Psoas muscle (tissue), 8 donors: ENCODE measurements at regions of chr16 and their contacts with region 1.

Region 1: DNA sequence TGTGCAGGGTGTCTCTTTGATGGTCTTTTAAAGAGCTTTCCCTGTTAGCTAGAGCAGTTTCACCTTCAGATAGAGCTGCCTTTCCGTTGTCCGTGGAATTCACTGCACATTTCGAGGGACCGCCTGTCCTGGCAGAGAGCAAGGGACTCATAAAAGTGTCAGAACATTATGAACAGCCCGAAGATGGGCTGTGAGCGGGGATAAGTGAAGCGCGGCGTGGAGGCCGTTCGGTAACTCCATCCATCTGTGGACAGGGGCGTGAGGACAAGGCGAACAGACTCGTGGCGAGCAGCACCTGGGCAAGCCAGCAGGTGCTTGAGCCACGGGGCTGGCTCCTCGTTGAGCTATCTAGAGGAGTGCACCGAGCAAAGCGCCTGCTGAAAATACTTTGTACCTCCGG is 371.2 kb downstream of the MAF start:
- DNase-seq: no peak
- ATAC-seq: no peak
- H3K4me3 ChIP-seq: no peak overlapping the region
- H3K27ac ChIP-seq: no peak overlapping the region
- H3K4me1 ChIP-seq: no peaks in the 10 kb centered on the region
- H3K27me3 ChIP-seq: no peaks in the 10 kb centered on the region
- CTCF ChIP-seq: no peak

Region 2: GRCh38 chr16:79170555-79171246 is 58.7 kb before region 1 on chr16:
- intact Hi-C with region 1: loop called in 1 of 2 experiments (anchors 10 kb)
- DNase-seq: peak in 1 of 2 donors; percentile 23
- ATAC-seq: no peak
- H3K4me3 ChIP-seq: no peak overlapping the region
- H3K27ac ChIP-seq: no peak overlapping the region
- H3K4me1 ChIP-seq: no peaks in the 10 kb centered on the region
- H3K27me3 ChIP-seq: no peaks in the 10 kb centered on the region
- CTCF ChIP-seq: no peak

Region 3: GRCh38 chr16:79186196-79186595 is 43.2 kb before region 1 on chr16:
- intact Hi-C with region 1: no loop called
- DNase-seq: no peak
- ATAC-seq: no peak
- H3K4me3 ChIP-seq: no peak overlapping the region
- H3K27ac ChIP-seq: no peak overlapping the region
- H3K4me1 ChIP-seq: no peaks in the 10 kb centered on the region
- H3K27me3 ChIP-seq: no peaks in the 10 kb centered on the region
- CTCF ChIP-seq: no peak

Region 4: DNA sequence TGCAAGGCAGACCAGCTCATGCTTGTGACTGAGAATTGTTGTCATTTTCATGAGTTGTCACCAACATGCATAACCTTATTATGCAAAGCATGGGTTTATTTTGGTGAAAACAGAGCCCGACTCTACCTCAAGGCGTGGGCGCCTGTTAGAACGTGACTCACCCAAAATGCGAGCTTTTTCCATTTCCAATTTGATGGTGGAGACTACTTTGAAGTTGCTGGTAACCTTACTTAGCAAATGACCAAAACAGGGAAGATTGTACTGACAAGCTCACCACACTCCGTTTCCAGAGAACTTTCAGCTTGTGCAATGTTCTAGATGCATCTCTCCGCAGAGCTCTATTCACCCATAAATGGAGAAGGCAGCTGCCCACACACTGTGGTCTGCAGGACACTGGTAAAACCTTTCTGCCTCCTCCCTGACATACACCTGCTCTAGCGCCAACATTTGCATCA is 86.7 kb after region 1 on chr16:
- intact Hi-C with region 1: no loop called
- DNase-seq: no peak
- ATAC-seq: no peak
- H3K4me3 ChIP-seq: no peak overlapping the region
- H3K27ac ChIP-seq: no peak overlapping the region
- H3K4me1 ChIP-seq: peaks cover 16% of the 10 kb centered on the region
- H3K27me3 ChIP-seq: no peaks in the 10 kb centered on the region
- CTCF ChIP-seq: no peak

Region 5: DNA sequence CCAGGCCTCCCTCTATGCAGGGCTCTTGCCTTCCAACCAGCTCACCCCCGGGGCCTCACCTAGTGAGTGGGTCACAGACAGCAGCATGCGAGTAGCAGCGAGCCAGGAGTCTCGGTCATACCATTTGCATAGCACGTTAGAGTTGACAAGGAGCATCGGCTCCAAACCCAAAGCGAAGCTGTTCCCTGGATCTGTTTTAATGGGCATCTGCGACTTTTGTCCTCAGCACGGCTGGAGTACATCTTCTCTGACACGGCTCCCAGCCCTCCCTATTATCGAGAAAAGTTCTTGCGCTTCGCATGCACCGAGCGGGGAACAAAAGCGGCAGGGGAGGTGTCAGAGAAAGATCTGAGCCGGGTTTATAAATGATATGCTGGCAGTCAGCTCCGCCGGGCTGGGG is 117.9 kb after region 1 on chr16:
- intact Hi-C with region 1: no loop called
- DNase-seq: no peak
- ATAC-seq: no peak
- H3K4me3 ChIP-seq: no peak overlapping the region
- H3K27ac ChIP-seq: no peak overlapping the region
- H3K4me1 ChIP-seq: peaks cover 7% of the 10 kb centered on the region
- H3K27me3 ChIP-seq: no peaks in the 10 kb centered on the region
- CTCF ChIP-seq: no peak

Region 6: GRCh38 chr16:79429381-79430190 is 200.2 kb after region 1 on chr16:
- intact Hi-C with region 1: no loop called
- DNase-seq: no peak
- ATAC-seq: peak in 2 of 4 donors; percentile 41 to 49
- H3K4me3 ChIP-seq: no peak overlapping the region
- H3K27ac ChIP-seq: no peak overlapping the region
- H3K4me1 ChIP-seq: peaks cover 8% of the 10 kb centered on the region
- H3K27me3 ChIP-seq: no peaks in the 10 kb centered on the region
- CTCF ChIP-seq: no peak